ENCODE measurements at regions of chr4 and their contacts with region 1.

Region 1: GRCh38 chr4:184745831-184746795 is 12.2 kb upstream of the CENPU start:
- DNase-seq: peak in 4 of 5 donors; percentile 69 to 78 (median 77)
- ATAC-seq: peak; percentile 71 to 88 (median 82)
- H3K4me3 ChIP-seq: peak overlapping the region in 5 of 12 donors; percentile 0 to 29 (median 9)
- H3K27ac ChIP-seq: peak overlapping the region; percentile 73 to 94 (median 81)
- H3K4me1 ChIP-seq: peaks cover 0 to 60% (median 37%) of the 10 kb centered on the region in 12 donors
- H3K27me3 ChIP-seq: no peaks in the 10 kb centered on the region
- CTCF ChIP-seq: peak; percentile 63 to 85 (median 78)
- POLR2A ChIP-seq: no peak

Region 2: DNA sequence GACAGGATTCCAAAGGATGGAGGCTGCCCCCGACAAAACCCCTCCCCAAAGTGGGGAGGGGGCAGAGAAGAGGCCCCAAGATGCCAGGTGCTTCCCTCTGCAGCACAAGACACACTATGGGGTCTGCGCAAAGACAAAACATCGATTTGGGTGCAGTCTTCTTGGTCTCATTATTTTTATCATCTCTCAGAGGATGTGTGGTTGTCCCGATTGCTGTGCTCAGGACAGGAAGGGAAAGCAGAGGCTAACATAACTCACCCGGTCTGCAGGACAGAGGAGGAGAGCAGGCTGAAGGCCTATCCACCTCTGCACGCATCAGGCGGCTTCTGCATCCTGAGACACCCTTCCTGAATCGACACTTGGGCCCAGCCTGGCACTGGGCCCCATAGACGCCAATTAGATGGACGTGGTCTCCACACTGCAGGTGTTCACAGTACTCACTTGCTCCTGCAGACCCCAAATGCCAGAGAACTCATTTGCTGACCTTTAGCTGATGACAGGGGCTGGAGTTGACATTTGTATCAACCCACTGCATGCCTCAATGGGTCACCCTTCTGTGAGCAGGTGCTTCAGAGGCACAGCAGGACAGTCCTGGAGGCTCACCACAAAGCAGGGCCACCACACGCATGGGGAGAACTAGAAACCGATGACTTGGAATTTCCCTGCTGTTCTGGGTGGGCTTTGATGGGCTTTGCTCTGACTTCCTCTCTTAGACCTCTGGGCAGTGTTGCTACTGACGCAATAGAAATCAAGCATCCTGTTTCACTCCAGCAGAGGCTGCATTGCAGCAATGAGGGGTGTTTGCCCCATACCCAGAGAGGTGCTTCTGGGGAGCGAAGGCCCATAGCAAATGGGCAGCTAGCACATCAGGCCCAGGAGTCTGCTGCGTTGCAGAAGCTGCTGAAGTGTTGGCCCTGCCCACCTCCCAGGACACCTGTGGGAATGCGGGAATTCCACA is 432.1 kb before region 1 on chr4:
- intact Hi-C with region 1: no loop called
- DNase-seq: no peak
- ATAC-seq: peak in 2 of 4 donors; percentile 34 to 55
- H3K4me3 ChIP-seq: no peak overlapping the region
- H3K27ac ChIP-seq: peak overlapping the region in 1 of 12 donors; percentile 55
- H3K4me1 ChIP-seq: peaks cover 0 to 31% (median 2%) of the 10 kb centered on the region in 12 donors
- H3K27me3 ChIP-seq: no peaks in the 10 kb centered on the region
- CTCF ChIP-seq: no peak
- POLR2A ChIP-seq: no peak

Region 3: DNA sequence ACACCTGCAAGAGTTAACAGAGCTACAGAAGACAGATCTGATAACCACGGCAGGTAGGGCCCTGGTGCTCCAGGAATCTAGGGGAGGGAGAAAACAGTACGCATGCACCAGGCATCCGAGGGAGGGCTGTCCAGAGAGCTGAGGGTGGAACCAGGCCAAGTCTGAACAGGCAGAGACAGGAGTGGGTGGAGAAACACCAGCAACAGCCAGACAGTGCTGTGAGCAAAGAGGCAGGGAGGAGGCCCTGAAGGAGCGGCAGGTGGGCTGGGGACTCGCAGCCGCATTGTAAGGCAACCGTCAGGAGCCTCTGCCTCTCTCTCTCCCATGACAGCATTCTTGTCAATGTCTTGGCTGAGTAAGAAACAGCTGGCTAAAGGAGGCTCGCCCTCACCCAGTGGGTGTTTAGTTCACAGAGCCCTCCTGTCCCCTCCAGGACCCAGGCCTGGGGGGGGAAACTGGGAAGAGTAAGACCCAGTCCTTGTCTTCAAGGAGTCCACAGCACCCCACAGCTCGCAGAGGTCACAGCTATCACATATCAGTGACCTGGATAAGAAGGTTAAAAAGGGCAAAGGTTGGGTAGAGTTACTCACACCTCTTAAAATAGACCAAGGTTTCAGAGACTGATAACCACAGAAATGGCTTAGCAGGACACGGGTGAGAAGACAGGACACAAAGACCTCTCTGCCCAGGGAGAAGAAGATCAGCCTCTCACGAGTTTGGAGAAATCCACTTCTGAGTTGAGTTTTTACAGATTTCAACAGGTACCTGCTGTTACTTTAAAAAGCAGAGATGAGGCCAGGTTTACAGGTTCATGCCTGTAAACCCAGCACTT is 69.1 kb after region 1 on chr4:
- intact Hi-C with region 1: loop called in 5 of 10 experiments (anchors 5 kb)
- DNase-seq: peak; percentile 80 to 93 (median 84)
- ATAC-seq: peak; percentile 78 to 85 (median 80)
- H3K4me3 ChIP-seq: peak overlapping the region in 4 of 12 donors; percentile 3 to 13 (median 4)
- H3K27ac ChIP-seq: peak overlapping the region; percentile 78 to 98 (median 92)
- H3K4me1 ChIP-seq: peaks cover 0 to 100% (median 71%) of the 10 kb centered on the region in 12 donors
- H3K27me3 ChIP-seq: no peaks in the 10 kb centered on the region
- CTCF ChIP-seq: no peak
- POLR2A ChIP-seq: peak in 1 of 2 donors; percentile 57

Region 4: GRCh38 chr4:184899261-184900134 is 153.4 kb after region 1 on chr4:
- intact Hi-C with region 1: loop called in 2 of 10 experiments (anchors 10 kb)
- DNase-seq: peak in 2 of 5 donors; percentile 36 to 44
- ATAC-seq: peak in 3 of 4 donors; percentile 47 to 65 (median 59)
- H3K4me3 ChIP-seq: no peak overlapping the region
- H3K27ac ChIP-seq: no peak overlapping the region
- H3K4me1 ChIP-seq: peaks cover 0 to 52% (median 4%) of the 10 kb centered on the region in 12 donors
- H3K27me3 ChIP-seq: peaks cover 0 to 3% (median 0%) of the 10 kb centered on the region in 9 donors
- CTCF ChIP-seq: no peak
- POLR2A ChIP-seq: no peak

Region 5: GRCh38 chr4:184983672-184984356 is 237.7 kb after region 1 on chr4:
- intact Hi-C with region 1: loop called (anchors 1 to 5 kb)
- DNase-seq: peak; percentile 52 to 81 (median 64)
- ATAC-seq: peak; percentile 70 to 82 (median 78)
- H3K4me3 ChIP-seq: no peak overlapping the region
- H3K27ac ChIP-seq: no peak overlapping the region
- H3K4me1 ChIP-seq: peaks cover 0 to 20% (median 11%) of the 10 kb centered on the region in 12 donors
- H3K27me3 ChIP-seq: no peaks in the 10 kb centered on the region
- CTCF ChIP-seq: peak in 10 of 12 donors; percentile 27 to 65 (median 50)
- POLR2A ChIP-seq: no peak

Region 6: DNA sequence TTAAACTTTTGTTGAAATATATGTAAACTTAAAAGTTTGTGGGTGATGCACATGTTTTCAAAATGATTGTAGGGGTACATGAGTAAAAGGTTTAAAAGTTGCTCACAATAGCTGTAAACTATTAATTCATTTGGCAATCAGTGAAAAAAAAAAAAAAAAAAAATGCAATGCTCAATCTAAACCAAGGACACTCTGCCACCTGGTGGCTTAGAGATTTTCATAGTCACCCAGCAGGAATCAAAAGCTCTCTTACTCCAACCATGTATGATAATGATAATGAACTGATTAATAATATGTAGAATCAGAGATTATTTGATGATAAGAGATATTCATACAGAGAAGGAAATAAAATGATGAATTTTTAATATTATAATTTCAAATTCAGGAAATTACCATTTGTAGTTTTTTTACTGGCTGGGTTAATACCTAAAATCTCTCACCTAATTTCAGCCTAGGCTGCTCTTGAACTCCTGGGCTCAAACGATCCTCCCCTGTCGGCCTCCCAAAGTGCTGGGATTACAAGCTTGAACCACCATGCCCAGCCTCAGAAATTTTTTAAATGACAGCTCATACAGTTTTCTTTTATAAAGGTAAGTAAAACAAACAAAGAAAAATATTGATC is 350.0 kb after region 1 on chr4:
- intact Hi-C with region 1: loop called in 6 of 10 experiments (anchors 5 to 10 kb)
- DNase-seq: peak in 1 of 5 donors; percentile 32
- ATAC-seq: no peak
- H3K4me3 ChIP-seq: no peak overlapping the region
- H3K27ac ChIP-seq: no peak overlapping the region
- H3K4me1 ChIP-seq: peaks cover 0 to 4% (median 0%) of the 10 kb centered on the region in 12 donors
- H3K27me3 ChIP-seq: no peaks in the 10 kb centered on the region
- CTCF ChIP-seq: peak; percentile 42 to 83 (median 64)
- POLR2A ChIP-seq: no peak

Region 7: GRCh38 chr4:185412412-185412811 is 666.3 kb after region 1 on chr4:
- intact Hi-C with region 1: no loop called
- DNase-seq: no peak
- ATAC-seq: peak in 1 of 4 donors; percentile 29
- H3K4me3 ChIP-seq: no peak overlapping the region
- H3K27ac ChIP-seq: peak overlapping the region in 1 of 12 donors; percentile 34
- H3K4me1 ChIP-seq: peaks cover 0 to 9% (median 0%) of the 10 kb centered on the region in 12 donors
- H3K27me3 ChIP-seq: no peaks in the 10 kb centered on the region
- CTCF ChIP-seq: no peak
- POLR2A ChIP-seq: no peak

Measured in heart left ventricle (tissue), 16 donors.